ENCODE measurements at regions of chr16 and their contacts with region 1.

Region 1: GRCh38 chr16:27367461-27368357 is 34.3 kb upstream of the IL21R start:
- DNase-seq: peak; percentile 99
- ATAC-seq: peak; percentile 71
- H3K4me3 Mint-ChIP-seq: peak overlapping the region; percentile 50
- H3K27ac Mint-ChIP-seq: peak overlapping the region; percentile 100
- H3K4me1 Mint-ChIP-seq: peaks cover 84% of the 10 kb centered on the region
- H3K27me3 Mint-ChIP-seq: no peaks in the 10 kb centered on the region
- CTCF ChIP-seq: peak; percentile 86

Region 2: DNA sequence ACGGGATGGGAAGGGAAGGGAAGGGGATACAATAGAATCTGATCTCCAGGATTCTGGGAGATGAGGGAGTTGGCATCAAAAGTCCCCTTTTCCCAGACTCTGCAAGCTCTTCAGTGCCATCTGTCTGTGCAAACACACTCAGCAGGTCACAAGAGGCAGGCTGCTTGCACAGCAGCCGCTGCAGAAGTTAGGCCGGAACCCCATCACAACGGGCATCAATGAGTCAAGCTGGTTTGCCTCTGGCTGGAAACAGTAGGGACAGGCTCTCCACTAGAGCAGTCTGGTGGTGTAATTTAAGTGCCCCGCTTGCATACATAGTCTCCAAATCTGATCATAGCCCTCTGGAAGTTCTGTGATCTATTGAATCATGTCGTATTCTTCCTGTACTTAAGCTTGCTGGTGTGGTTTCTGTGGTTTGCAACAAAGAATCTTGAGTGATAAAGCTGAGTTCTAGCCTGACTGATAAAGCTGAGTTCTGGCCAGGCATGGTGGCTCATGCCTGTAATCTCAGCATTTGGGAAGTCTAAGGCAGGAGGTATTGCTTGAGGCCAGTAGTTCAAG is 198.1 kb before region 1 on chr16:
- CTCF ChIA-PET with region 1: interaction called, 15 read pairs
- POLR2A ChIA-PET with region 1: interaction called, 3 read pairs
- intact Hi-C with region 1: loop called (anchors 5 kb)
- DNase-seq: peak; percentile 90
- ATAC-seq: peak; percentile 89
- H3K4me3 Mint-ChIP-seq: peak overlapping the region; percentile 27
- H3K27ac Mint-ChIP-seq: peak overlapping the region; percentile 72
- H3K4me1 Mint-ChIP-seq: peaks cover 59% of the 10 kb centered on the region
- H3K27me3 Mint-ChIP-seq: no peaks in the 10 kb centered on the region
- CTCF ChIP-seq: no peak

Region 3: DNA sequence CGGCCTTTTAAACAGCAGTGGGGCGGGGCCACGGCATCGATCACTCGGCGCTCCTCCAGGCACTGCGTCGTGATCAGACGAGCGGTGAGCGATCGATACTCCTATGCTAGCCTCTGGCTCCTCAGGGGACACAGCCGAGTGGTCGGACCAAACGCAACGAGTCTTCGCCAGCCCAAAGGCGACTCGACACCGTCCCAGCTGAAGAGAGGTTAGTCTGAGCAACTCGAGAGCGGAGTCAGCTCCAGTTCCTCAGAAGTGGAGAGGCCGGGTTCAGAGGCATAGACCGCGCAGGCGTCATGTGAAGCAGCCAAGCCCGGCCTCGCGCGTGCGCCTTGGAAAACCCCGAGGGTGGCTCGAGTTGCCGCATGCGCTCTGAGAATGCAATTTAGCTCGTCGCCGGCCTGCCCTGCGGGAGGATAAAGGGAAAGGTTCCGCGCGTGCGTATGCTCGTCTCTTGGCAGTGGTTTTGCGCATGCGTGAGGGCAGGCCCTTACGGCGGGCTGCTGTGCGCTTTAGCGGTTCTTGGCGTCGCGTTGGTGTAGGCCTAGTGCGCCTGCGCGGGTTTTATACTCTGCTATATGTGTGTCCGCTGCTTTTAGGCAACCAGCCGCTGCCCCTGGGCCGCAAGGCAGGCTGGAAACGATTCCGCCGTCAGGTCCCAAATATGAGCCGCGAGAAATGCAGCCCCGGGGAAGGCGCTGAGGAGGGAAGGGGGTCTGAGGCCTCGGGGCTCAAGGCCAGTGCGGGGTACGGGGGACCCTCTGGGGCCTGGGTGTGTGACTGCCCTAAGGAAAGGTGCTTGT is 164.1 kb before region 1 on chr16 and contains the start of gene KDM8:
- CTCF ChIA-PET with region 1: interaction called, 11 read pairs
- POLR2A ChIA-PET with region 1: interaction called, 10 read pairs
- intact Hi-C with region 1: no loop called
- DNase-seq: peak; percentile 99
- ATAC-seq: peak; percentile 92
- H3K4me3 Mint-ChIP-seq: peak within 1 kb of the TSS; percentile 83
- H3K27ac Mint-ChIP-seq: peak within 1 kb of the TSS; percentile 100
- H3K4me1 Mint-ChIP-seq: peaks cover 48% of the 10 kb centered on the region
- H3K27me3 Mint-ChIP-seq: no peaks in the 10 kb centered on the region
- CTCF ChIP-seq: no peak
- total RNA-seq, gene KDM8: 10.9 to 12.7 TPM

Region 4: DNA sequence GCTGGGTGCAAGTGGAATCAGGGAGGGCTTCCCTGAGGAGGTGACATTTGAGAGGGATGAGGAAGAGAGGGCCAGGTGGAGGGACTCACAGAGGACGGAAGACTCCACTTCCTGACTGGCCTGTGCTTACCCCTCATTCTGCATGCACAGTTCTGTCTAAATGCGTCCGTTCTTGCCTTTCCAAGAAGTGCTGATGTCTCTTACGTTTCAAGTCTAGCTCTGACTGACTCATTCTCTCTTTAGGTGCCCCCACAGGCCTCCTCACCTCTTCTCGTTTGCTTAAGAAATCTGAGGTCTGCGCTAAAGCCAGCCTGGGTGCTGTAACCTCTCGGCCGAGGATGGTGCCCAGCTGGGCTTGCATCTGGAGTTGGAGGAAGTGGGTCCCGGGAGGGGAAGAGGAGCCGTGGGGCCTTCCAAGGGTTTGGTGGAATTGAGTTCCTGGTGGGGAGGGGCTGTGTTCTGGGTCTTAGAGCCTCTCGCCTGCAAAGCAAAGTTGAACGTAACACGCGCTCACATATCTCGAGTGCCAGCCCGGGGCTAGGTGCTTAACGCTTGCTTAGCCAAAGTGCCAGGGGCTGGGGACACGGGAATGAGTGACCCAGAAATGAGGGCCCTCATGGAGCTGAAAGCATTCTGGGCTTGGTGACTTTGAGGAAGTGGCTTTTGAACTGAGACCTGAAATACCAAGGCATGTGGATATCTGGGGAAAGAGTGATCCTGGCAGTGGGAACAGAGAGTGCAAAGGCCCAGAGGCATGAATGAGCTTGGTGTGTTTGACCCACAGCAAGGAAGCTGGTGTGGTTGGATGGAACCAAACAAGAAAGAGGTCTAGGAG is 49.1 kb before region 1 on chr16:
- CTCF ChIA-PET with region 1: interaction called, 31 read pairs
- POLR2A ChIA-PET with region 1: interaction called, 50 read pairs
- intact Hi-C with region 1: loop called (anchors 2 kb)
- DNase-seq: peak; percentile 84
- ATAC-seq: peak; percentile 76
- H3K4me3 Mint-ChIP-seq: peak overlapping the region; percentile 89
- H3K27ac Mint-ChIP-seq: peak overlapping the region; percentile 98
- H3K4me1 Mint-ChIP-seq: peaks cover 59% of the 10 kb centered on the region
- H3K27me3 Mint-ChIP-seq: no peaks in the 10 kb centered on the region
- CTCF ChIP-seq: no peak

Region 5: GRCh38 chr16:27401768-27402568 is 34.3 kb after region 1 on chr16 and contains the start of gene IL21R:
- CTCF ChIA-PET with region 1: interaction called, 92 read pairs
- POLR2A ChIA-PET with region 1: interaction called, 168 read pairs
- intact Hi-C with region 1: loop called (anchors 2 kb)
- DNase-seq: peak; percentile 95
- ATAC-seq: peak; percentile 74
- H3K4me3 Mint-ChIP-seq: peak within 1 kb of the TSS; percentile 99
- H3K27ac Mint-ChIP-seq: peak within 1 kb of the TSS; percentile 96
- H3K4me1 Mint-ChIP-seq: peaks cover 37% of the 10 kb centered on the region
- H3K27me3 Mint-ChIP-seq: no peaks in the 10 kb centered on the region
- CTCF ChIP-seq: no peak
- total RNA-seq, gene IL21R: 95.6 to 97.2 TPM

Region 6: DNA sequence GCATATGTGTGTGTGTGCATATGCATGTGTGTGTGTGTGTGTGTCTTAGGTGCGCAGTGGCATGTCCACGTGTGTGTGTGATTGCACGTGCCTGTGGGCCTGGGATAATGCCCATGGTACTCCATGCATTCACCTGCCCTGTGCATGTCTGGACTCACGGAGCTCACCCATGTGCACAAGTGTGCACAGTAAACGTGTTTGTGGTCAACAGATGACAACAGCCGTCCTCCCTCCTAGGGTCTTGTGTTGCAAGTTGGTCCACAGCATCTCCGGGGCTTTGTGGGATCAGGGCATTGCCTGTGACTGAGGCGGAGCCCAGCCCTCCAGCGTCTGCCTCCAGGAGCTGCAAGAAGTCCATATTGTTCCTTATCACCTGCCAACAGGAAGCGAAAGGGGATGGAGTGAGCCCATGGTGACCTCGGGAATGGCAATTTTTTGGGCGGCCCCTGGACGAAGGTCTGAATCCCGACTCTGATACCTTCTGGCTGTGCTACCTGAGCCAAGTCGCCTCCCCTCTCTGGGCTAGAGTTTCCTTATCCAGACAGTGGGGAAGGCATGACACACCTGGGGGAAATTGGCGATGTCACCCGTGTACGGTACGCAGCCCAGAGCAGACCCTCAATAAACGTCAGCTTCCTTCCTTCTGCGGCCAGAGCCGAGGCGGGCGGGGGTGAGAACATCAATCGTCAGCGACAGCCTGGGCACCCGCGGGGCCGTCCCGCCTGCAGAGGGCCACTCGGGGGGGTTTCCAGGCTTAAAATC is 81.9 kb after region 1 on chr16:
- CTCF ChIA-PET with region 1: interaction called, 16 read pairs
- POLR2A ChIA-PET with region 1: interaction called, 25 read pairs
- intact Hi-C with region 1: loop called (anchors 5 kb)
- DNase-seq: peak; percentile 97
- ATAC-seq: peak; percentile 74
- H3K4me3 Mint-ChIP-seq: peak overlapping the region; percentile 53
- H3K27ac Mint-ChIP-seq: peak overlapping the region; percentile 97
- H3K4me1 Mint-ChIP-seq: peaks cover 93% of the 10 kb centered on the region
- H3K27me3 Mint-ChIP-seq: no peaks in the 10 kb centered on the region
- CTCF ChIP-seq: no peak

Region 7: DNA sequence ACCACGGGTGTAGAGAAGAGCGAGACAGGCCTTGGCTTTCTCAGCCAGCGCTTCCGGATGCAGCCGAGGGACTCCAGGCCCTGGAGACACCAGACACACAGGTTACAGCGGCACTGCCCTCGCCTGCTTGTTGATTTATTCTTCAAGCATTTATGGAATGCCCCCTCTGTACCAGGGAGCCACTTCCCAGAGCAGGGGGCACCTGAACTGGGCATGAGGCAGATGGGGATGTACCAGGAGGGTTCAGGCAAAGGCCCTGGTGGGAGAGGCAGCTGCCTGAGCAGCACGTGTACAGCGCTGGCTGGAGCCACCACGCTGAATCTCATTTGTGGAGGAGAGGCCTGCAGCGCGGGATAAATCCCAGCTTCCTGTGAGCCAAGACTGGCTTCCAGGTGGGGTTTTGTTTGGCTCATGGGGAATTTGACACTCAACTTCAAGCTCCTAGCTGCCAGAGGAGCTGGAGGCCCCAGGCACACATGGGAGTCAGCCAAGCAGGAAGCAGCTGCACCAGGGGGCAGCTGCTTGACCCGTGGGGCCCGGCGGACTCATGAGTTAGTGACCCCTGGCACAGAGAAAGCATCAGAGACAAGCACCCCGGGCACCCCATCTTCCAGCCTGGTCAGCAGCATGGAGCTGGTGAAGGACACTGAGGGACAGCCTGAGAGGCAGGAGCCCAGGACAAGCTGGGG is 93.9 kb after region 1 on chr16:
- CTCF ChIA-PET with region 1: interaction called, 11 read pairs
- POLR2A ChIA-PET with region 1: interaction called, 9 read pairs
- intact Hi-C with region 1: no loop called
- DNase-seq: no peak
- ATAC-seq: no peak
- H3K4me3 Mint-ChIP-seq: no peak overlapping the region
- H3K27ac Mint-ChIP-seq: no peak overlapping the region
- H3K4me1 Mint-ChIP-seq: peaks cover 62% of the 10 kb centered on the region
- H3K27me3 Mint-ChIP-seq: no peaks in the 10 kb centered on the region
- CTCF ChIP-seq: no peak